ENCODE measurements at regions of chr12 and their contacts with region 1.

Region 1: GRCh38 chr12:24929953-24930352 is 18.9 kb downstream of the BCAT1 start:
- DNase-seq: no peak
- ATAC-seq: no peak
- H3K4me3 ChIP-seq: no peak overlapping the region
- H3K27ac ChIP-seq: no peak overlapping the region
- H3K4me1 ChIP-seq: no peaks in the 10 kb centered on the region
- H3K27me3 ChIP-seq: no peaks in the 10 kb centered on the region
- CTCF ChIP-seq: no peak

Region 2: GRCh38 chr12:24948757-24949722 is 19.1 kb after region 1 on chr12 and contains the start of gene BCAT1:
- CTCF ChIA-PET with region 1: no interaction called
- POLR2A ChIA-PET with region 1: no interaction called
- in situ Hi-C with region 1: no loop called
- intact Hi-C with region 1: no loop called
- DNase-seq: no peak
- ATAC-seq: peak; percentile 83
- H3K4me3 ChIP-seq: peak within 1 kb of the TSS; percentile 49 to 72
- H3K27ac ChIP-seq: peak within 1 kb of the TSS; percentile 42
- H3K4me1 ChIP-seq: peaks cover 9% of the 10 kb centered on the region
- H3K27me3 ChIP-seq: peaks cover 40% of the 10 kb centered on the region
- CTCF ChIP-seq: no peak; the same call in 1 of the 2 replicates
- total RNA-seq, gene BCAT1: 5.8 TPM

Region 3: GRCh38 chr12:25151476-25151875 is 221.5 kb after region 1 on chr12:
- CTCF ChIA-PET with region 1: interaction called, 11 read pairs
- POLR2A ChIA-PET with region 1: no interaction called
- in situ Hi-C with region 1: no loop called
- intact Hi-C with region 1: no loop called
- DNase-seq: peak; percentile 75
- ATAC-seq: peak; percentile 78
- H3K4me3 ChIP-seq: no peak overlapping the region
- H3K27ac ChIP-seq: no peak overlapping the region
- H3K4me1 ChIP-seq: no peaks in the 10 kb centered on the region
- H3K27me3 ChIP-seq: no peaks in the 10 kb centered on the region
- CTCF ChIP-seq: no peak